ENCODE measurements at regions of chr11 and their contacts with region 1.

Region 1: GRCh38 chr11:16820324-16821092 is 82.1 kb downstream of the C11orf58 start:
- DNase-seq: peak; percentile 87
- ATAC-seq: peak; percentile 61

Region 2: GRCh38 chr11:16881074-16881709 is 60.7 kb after region 1 on chr11:
- intact Hi-C with region 1: loop called (anchors 1 kb)
- DNase-seq: peak; percentile 65
- ATAC-seq: peak; percentile 84

Region 3: DNA sequence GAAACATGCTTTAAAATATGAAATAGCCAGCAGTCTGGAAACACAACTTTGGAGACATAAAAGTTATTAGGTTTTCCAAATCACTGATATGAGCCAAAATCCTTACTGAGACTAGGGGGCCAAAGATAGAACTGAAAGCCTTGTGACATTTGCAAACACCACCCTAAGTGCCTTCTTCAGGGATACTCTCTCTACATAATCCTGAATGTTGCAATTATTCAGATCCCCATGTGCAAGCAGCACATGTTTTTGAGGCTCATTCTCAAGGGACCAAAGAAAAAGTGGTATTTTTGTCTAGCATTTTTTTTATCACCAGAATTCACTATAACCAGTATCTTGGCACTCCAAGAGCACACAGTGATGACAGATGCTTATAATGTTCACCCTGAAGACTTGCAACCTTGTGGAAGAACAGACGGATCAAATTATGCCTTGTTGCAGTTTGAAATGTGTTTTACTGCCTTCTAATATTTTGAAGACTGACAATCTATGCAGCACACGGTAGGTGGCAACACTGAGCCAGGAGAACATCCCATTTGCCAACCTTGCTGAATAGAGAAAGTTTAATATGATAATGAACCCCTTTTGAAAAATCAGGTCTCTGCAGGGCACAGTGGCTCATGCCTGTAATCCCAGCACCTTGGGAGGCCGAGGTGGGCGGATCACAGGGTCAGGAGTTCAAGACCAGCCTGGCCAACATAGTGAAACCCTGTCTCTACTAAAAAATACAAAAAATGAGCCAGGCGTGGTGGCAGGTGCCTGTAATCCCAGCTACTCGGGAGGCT is 115.2 kb after region 1 on chr11:
- intact Hi-C with region 1: loop called (anchors 5 kb)
- DNase-seq: no peak
- ATAC-seq: peak; percentile 54

Region 4: DNA sequence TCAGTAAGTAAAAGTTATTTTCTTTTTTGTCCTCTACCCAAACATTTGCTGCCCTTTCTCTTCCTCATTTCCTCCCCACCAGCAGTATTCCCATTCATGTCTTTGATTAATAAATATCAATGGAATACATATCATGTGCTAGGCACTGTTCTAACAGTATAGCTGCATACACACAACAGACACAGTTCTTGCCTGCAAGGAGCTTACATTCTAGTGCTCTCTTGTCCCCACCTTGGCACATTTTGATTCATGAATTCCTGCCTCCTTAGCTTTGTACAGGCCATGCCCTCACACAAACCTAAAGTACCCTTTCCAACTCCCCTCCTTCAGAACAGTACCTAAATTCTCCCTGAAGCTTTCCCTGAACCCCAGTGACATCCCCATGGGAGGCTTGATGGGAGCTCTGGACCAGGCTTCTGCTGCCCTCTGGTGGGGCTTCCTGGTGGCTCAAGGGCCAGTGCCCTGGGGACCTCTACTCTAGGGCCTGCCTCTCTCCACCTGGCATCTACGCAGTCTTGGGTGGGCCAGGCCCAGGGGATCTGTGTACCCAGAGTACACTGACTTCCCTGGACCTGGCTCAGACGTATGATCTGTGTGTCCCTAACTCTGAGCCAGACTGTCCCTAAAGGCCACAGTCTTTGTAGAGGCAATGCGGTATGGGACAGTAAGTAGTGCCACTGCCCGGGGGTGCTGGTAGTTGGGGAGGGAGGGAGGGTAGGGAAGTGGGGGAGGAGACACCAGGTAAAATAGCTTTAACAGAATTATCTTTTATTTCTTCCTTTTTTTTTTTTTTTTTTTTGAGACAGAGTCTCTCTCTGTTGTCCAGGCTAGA is 242.9 kb after region 1 on chr11:
- intact Hi-C with region 1: loop called (anchors 5 kb)
- DNase-seq: peak; percentile 72
- ATAC-seq: peak; percentile 88